GM12878 (cell line): ENCODE measurements at regions of chr17 and their contacts with region 1.

Region 1: DNA sequence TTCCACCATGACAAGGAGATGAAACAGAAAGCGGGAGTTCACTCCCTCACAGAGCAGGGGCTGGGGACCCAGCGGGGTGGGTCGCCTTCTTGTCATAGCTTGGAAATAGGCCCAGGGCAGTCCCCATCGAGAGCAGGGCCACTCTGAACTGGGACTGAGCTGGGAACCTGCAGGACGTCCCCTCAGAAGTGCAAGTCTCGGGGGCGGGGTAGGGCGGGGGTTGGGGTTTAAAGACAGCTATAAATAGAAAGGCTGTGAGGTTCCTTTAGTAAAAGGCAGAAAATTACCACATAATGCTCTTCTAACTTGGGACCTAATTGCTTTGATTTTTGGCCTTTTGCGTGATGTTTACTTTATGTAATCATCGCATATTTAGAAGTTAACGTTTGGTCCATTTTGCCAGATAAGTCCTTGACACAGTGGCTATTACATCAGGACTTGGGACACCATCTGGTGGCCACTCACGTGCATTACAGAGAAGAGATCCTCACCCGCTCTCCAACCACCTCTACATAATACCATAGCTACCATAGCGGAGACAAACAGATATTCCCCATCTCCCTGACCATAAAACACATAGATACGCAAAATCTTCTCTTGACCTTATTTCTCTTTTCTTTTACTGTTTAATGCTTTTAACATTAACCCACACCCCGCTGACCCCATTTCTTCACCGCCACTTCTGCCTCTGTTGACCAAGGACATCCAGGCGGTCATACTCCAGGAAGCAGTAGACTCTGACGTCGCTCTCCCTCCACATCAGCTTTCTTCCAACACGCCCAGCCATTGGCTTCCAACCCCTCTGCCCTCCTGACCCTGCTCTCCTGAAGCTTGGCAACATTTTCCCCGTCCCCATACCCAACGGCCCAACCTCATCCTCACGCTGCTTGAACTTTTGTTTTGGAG is 27.5 kb upstream of the PIK3R6 start:
- DNase-seq: peak; percentile 65
- ATAC-seq: peak; percentile 66
- H3K4me3 ChIP-seq: peak overlapping the region; percentile 14; the same call in 1 of the 2 replicates
- H3K27ac ChIP-seq: peak overlapping the region; percentile 98
- H3K4me1 ChIP-seq: peaks cover 71% of the 10 kb centered on the region
- H3K27me3 ChIP-seq: no peaks in the 10 kb centered on the region
- CTCF ChIP-seq: peak; percentile 74 to 90 (median 83)
- EP300 ChIP-seq: no peak
- POLR2A ChIP-seq: no peak; the same call in none of the 2 replicates
- RAD21 ChIP-seq: peak; percentile 84

Region 2: DNA sequence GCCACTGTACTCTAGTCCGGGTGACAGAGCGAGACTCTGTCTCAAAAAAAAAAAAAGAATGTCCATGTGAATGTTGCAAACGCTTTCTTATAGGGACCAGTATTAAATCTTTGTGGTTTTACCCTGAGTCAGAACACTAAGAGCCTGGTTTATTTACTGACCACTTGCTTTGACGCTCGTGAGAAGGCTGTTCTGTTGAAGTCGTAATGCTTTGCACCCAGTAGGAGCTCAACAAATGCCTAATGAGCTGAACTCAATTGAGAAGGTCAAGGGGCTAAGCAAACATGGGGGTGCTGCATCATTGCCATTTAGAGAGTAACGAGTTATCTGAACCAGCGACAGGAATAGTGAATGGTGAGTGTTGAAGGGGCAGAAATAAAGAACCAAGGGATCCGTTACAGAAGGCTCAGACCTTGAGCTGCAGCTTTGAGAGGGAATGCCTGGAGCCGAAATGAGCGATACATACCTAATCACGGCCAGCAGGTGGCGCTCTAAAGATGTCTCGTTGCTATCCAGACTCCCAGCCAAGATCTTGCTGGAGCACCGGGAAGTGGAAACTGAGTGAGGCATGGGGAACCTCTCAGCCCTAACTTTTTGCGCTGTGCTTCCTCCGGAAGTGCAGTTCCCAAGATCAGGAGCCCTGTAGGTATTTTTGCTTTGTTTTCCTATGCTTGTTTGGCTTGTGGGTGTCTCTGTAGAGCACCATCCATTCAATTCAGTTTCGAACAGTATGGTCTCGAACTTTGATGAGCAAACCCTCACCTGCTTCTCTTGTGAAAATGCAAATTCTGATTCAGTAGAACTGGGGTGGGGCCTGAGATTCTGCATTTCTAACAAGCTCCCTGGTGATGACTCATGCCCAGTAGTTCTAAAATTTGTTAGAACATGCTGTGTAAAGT is 484.7 kb before region 1 on chr17:
- CTCF ChIA-PET with region 1: interaction called, 14 read pairs
- POLR2A ChIA-PET with region 1: no interaction called
- RAD21 ChIA-PET with region 1: interaction called, 10 read pairs
- SMC1A ChIA-PET with region 1: interaction called, 7 read pairs
- in situ Hi-C with region 1: no loop called
- intact Hi-C with region 1: loop called (anchors 10 kb)
- DNase-seq: peak; percentile 17
- ATAC-seq: peak; percentile 90
- H3K4me3 ChIP-seq: no peak overlapping the region
- H3K27ac ChIP-seq: no peak overlapping the region
- H3K4me1 ChIP-seq: no peaks in the 10 kb centered on the region
- H3K27me3 ChIP-seq: peaks cover 0 to 4% of the 10 kb centered on the region in 2 experiments; a peak in 3 of 4 replicates
- CTCF ChIP-seq: peak; percentile 82 to 87 (median 83)
- EP300 ChIP-seq: 0 out of 4 replicates have a peak, but pooled peaks of 1 of the 2 experiments have one; percentile 15
- POLR2A ChIP-seq: no peak
- RAD21 ChIP-seq: peak; percentile 71

Region 3: DNA sequence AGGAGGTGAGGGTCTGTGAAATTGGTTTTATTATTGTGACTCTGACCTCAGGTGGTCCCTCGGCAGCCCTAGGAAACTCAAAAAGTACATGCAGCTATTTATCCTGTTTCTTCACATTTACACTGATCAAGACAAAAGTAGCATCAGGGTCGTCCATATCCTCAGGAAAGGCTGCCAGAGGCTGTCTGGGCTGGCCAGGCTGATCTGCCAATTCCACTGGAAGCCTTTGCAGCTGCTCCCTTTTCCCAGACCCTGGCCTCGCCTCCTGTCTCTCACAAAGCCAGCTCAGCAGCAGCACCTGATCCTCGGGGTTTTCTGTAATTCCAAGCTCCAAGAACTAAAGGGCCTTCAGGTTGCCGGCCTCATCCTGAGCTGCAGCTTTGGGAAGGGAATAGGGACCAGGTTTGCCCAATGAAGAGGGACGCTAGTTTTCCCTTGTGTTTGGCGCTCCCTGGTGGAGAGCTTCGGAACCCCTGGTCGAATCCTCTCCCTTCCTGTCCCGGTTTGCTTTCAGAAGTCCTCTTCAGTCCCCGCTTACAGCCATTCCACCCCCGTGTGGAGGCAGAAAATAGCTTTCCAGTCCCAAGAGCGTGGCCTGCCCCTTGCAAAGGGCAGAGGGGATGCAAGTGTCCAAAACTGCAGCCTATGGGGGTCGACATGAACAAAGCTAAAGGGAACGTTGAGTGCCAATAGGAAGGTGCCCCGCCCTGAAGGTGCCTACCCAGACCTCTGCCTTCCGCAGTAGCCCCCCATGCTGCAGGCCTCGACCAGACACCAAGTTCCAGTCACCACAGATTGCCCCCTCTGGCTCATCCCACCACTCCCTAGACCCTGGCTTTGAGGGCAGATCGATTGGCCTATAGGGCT is 109.1 kb before region 1 on chr17:
- CTCF ChIA-PET with region 1: interaction called, 55 read pairs
- POLR2A ChIA-PET with region 1: no interaction called
- RAD21 ChIA-PET with region 1: interaction called, 10 read pairs
- SMC1A ChIA-PET with region 1: interaction called, 14 read pairs
- in situ Hi-C with region 1: no loop called
- intact Hi-C with region 1: loop called (anchors 5 kb)
- DNase-seq: no peak
- ATAC-seq: peak; percentile 89
- H3K4me3 ChIP-seq: no peak overlapping the region
- H3K27ac ChIP-seq: no peak overlapping the region
- H3K4me1 ChIP-seq: no peaks in the 10 kb centered on the region
- H3K27me3 ChIP-seq: no peaks in the 10 kb centered on the region
- CTCF ChIP-seq: peak; percentile 64 to 87 (median 84)
- EP300 ChIP-seq: no peak
- POLR2A ChIP-seq: no peak
- RAD21 ChIP-seq: peak; percentile 75

Region 4: DNA sequence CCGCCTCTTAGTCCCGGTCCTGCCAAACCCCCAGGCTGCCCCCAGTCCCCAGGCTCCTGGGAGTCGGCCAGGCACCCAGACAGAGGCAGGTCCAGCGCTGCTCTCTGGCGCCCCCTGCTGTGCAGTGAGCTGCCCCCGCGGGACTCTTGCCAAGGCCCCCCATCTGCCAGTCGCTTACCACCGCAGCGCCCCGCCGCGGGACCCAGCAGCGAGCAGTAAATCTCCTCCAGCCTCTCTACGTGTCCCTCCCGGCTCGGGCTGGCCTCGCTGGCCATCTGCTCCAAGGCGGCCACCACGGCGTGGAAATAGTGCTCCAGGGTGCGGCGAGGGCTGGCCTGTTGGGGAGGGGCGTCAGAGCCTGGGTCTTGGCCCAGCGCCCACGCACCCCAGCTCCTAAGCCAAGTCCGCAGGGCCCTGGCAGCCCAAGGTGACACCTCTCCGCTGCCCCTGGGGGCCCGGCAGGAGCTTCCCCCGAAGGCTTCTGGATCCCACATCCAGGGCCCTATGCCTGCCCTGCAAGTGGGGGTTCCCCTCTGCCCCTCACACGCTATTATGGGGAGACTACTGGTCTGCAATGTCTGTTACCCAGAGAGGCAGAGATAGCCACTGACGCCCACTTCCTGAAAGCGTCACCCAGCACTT is 62.1 kb before region 1 on chr17:
- CTCF ChIA-PET with region 1: interaction called, 14 read pairs
- POLR2A ChIA-PET with region 1: interaction called, 4 read pairs
- RAD21 ChIA-PET with region 1: interaction called, 4 read pairs
- SMC1A ChIA-PET with region 1: interaction called, 3 read pairs
- in situ Hi-C with region 1: no loop called
- intact Hi-C with region 1: no loop called
- DNase-seq: no peak
- ATAC-seq: peak; percentile 60
- H3K4me3 ChIP-seq: no peak overlapping the region
- H3K27ac ChIP-seq: no peak overlapping the region
- H3K4me1 ChIP-seq: no peaks in the 10 kb centered on the region
- H3K27me3 ChIP-seq: no peaks in the 10 kb centered on the region
- CTCF ChIP-seq: peak; percentile 35 to 73 (median 56)
- EP300 ChIP-seq: no peak
- POLR2A ChIP-seq: no peak; the same call in 1 of the 2 replicates
- RAD21 ChIP-seq: 0 out of 2 replicates have a peak, but pooled peaks have one; percentile 11

Region 5: GRCh38 chr17:8867361-8867981 is 27.5 kb before region 1 on chr17 and contains the start of gene PIK3R6:
- CTCF ChIA-PET with region 1: interaction called, 100 read pairs
- POLR2A ChIA-PET with region 1: interaction called, 19 read pairs
- RAD21 ChIA-PET with region 1: interaction called, 115 read pairs
- SMC1A ChIA-PET with region 1: interaction called, 132 read pairs
- in situ Hi-C with region 1: no loop called
- intact Hi-C with region 1: no loop called
- DNase-seq: no peak
- ATAC-seq: peak; percentile 65
- H3K4me3 ChIP-seq: peak within 1 kb of the TSS; percentile 99
- H3K27ac ChIP-seq: peak within 1 kb of the TSS; percentile 88
- H3K4me1 ChIP-seq: peaks cover 25% of the 10 kb centered on the region
- H3K27me3 ChIP-seq: no peaks in the 10 kb centered on the region
- CTCF ChIP-seq: no peak
- EP300 ChIP-seq: no peak
- POLR2A ChIP-seq: peak; percentile 83
- RAD21 ChIP-seq: no peak
- polyA plus RNA-seq, gene PIK3R6: 6.7 to 7.4 TPM

Region 6: GRCh38 chr17:8960325-8961140 is 65.6 kb after region 1 on chr17:
- CTCF ChIA-PET with region 1: interaction called, 19 read pairs
- POLR2A ChIA-PET with region 1: interaction called, 18 read pairs
- RAD21 ChIA-PET with region 1: interaction called, 53 read pairs
- SMC1A ChIA-PET with region 1: interaction called, 208 read pairs
- in situ Hi-C with region 1: no loop called
- intact Hi-C with region 1: loop called (anchors 2 kb)
- DNase-seq: no peak
- ATAC-seq: peak; percentile 10
- H3K4me3 ChIP-seq: peak overlapping the region; percentile 57; the same call in 1 of the 2 replicates
- H3K27ac ChIP-seq: peak overlapping the region; percentile 81
- H3K4me1 ChIP-seq: peaks cover 61% of the 10 kb centered on the region
- H3K27me3 ChIP-seq: no peaks in the 10 kb centered on the region
- CTCF ChIP-seq: no peak
- EP300 ChIP-seq: no peak
- POLR2A ChIP-seq: peak; percentile 38; the same call in 1 of the 2 replicates
- RAD21 ChIP-seq: no peak

Region 7: DNA sequence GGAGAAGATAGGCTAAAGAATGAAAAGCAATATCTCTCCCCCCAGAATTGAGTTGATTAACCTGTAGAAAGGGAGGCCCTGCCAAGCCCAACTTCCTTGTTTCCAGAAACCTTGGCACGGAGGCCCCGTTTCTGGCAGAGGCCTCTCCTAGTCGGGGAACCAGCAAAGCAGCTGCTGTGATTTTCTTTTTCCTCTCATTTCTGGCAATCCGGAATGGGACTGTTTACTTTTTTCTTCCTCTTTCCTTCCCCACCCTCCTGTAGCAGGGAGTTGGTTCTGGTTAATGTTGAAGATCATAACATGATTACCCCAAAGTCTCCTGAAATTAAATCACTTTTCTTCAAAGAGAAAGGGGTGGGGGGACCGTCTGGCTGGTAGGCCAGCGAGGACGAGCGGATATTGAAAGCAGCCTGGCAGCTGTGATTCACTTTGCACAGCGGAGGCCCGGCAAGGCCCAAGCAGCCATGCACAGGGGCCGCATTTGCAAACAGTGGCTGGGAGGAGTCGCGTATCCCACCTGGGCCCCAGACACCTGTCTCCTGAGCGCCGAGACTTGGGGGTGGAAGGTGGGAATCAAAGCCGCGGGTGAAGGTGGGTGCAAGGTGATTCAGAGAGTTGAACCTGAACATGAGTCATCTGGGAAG is 177.9 kb after region 1 on chr17:
- CTCF ChIA-PET with region 1: no interaction called
- POLR2A ChIA-PET with region 1: no interaction called
- RAD21 ChIA-PET with region 1: no interaction called
- SMC1A ChIA-PET with region 1: no interaction called
- in situ Hi-C with region 1: no loop called
- intact Hi-C with region 1: no loop called
- DNase-seq: no peak
- ATAC-seq: no peak
- H3K4me3 ChIP-seq: no peak overlapping the region
- H3K27ac ChIP-seq: no peak overlapping the region
- H3K4me1 ChIP-seq: no peaks in the 10 kb centered on the region
- H3K27me3 ChIP-seq: peaks cover 2 to 5% of the 10 kb centered on the region in 2 experiments; a peak in 2 of 4 replicates
- CTCF ChIP-seq: no peak
- EP300 ChIP-seq: no peak
- POLR2A ChIP-seq: no peak
- RAD21 ChIP-seq: no peak